Naive thymus-derived CD4-positive, alpha-beta T cell (primary cell): ENCODE measurements at regions of chr11 and their contacts with region 1.

Region 1: GRCh38 chr11:47269002-47269828 is 718 bp upstream of the MADD start:
- DNase-seq: peak; percentile 82 to 89 (median 87)
- ATAC-seq: peak; percentile 82
- H3K4me3 ChIP-seq: peak overlapping the region; percentile 65
- H3K4me3 Mint-ChIP-seq: peak overlapping the region; percentile 78 to 97 (median 87)
- H3K27ac ChIP-seq: peak overlapping the region; percentile 95
- H3K27ac Mint-ChIP-seq: peak overlapping the region; percentile 93 to 99 (median 96)
- H3K4me1 ChIP-seq: peaks cover 27 to 43% of the 10 kb centered on the region in 2 donors
- H3K4me1 Mint-ChIP-seq: peaks cover 38 to 62% (median 59%) of the 10 kb centered on the region in 7 donors
- H3K27me3 ChIP-seq: no peaks in the 10 kb centered on the region
- H3K27me3 Mint-ChIP-seq: no peaks in the 10 kb centered on the region

Region 2: GRCh38 chr11:46346886-46347636 is 922.2 kb before region 1 on chr11 and contains the start of gene DGKZ:
- CTCF ChIA-PET with region 1: no interaction called
- POLR2A ChIA-PET with region 1: no interaction called
- intact Hi-C with region 1: loop called in 1 of 2 experiments (anchors 5 kb)
- DNase-seq: peak; percentile 85 to 100 (median 96)
- ATAC-seq: peak; percentile 92
- H3K4me3 ChIP-seq: peak within 1 kb of the TSS; percentile 91
- H3K4me3 Mint-ChIP-seq: peak within 1 kb of the TSS; percentile 93 to 97 (median 95)
- H3K27ac ChIP-seq: peak within 1 kb of the TSS; percentile 83
- H3K27ac Mint-ChIP-seq: peak within 1 kb of the TSS; percentile 89 to 98 (median 94)
- H3K4me1 ChIP-seq: peaks cover 46 to 79% of the 10 kb centered on the region in 2 donors
- H3K4me1 Mint-ChIP-seq: peaks cover 61 to 85% (median 75%) of the 10 kb centered on the region in 7 donors
- H3K27me3 ChIP-seq: no peaks in the 10 kb centered on the region
- H3K27me3 Mint-ChIP-seq: peaks cover 0 to 3% (median 0%) of the 10 kb centered on the region in 5 donors
- total RNA-seq, gene DGKZ: 146 to 291 (median 263) TPM

Region 3: DNA sequence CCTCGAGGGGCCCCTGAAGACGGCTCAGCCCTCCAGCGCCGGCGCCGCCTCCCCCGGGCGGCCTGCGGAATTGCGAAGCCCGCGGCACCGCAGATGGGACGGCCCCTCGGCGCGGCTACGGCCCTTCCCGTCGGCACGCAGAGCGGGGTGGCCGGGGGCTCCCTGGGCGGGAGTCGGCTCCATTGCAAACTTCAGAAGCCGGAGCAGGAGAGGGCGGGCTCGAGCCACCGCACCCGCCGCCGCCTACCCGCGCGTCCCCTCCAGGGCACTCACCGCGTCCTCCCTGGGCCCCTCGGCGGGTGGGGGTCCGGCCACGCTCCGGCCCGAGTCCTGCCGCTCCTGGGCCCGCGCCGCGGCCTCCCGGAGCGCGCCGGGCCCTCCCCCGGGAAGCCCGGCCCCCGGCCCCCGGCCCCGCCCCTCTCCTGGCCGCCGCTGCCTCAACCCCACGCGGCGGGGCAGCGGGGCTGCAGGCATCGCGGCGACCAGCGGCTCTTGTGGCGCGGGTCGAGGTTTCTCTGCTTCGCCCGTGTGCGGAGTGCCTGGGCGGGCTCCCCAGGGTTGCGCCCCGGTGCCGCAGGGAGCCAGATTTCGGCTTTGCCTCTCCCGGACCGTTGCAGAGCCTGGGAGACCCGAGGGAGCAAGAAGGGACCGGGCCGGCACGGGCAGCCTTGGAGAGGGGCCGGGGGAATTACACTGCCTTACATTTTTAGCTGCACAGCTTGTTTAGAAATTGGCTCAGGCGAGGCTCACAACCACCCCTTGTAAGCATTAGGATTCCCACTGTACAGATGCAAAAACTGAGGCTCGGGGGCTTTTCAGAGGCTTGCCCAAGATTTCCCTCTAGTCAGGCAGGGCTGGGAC is 82.9 kb before region 1 on chr11 and contains the start of gene PACSIN3:
- CTCF ChIA-PET with region 1: no interaction called
- POLR2A ChIA-PET with region 1: interaction called, 5 read pairs
- intact Hi-C with region 1: loop called in 1 of 2 experiments (anchors 1 kb)
- DNase-seq: peak in 6 of 9 donors; percentile 22 to 66 (median 32)
- ATAC-seq: peak; percentile 75
- H3K4me3 ChIP-seq: peak within 1 kb of the TSS; percentile 54
- H3K4me3 Mint-ChIP-seq: peak within 1 kb of the TSS; percentile 79 to 89 (median 82)
- H3K27ac ChIP-seq: no peak within 1 kb of the TSS
- H3K27ac Mint-ChIP-seq: peak within 1 kb of the TSS in 4 of 9 donors; percentile 17 to 83 (median 27)
- H3K4me1 ChIP-seq: peaks cover 7 to 12% of the 10 kb centered on the region in 2 donors
- H3K4me1 Mint-ChIP-seq: peaks cover 0 to 9% (median 5%) of the 10 kb centered on the region in 7 donors
- H3K27me3 ChIP-seq: peaks cover 0 to 14% of the 10 kb centered on the region in 2 donors
- H3K27me3 Mint-ChIP-seq: peaks cover 4 to 44% (median 13%) of the 10 kb centered on the region in 5 donors
- total RNA-seq, gene PACSIN3: 0.34 to 4.3 TPM in 2 of 5 experiments, not detected in the others

Region 4: DNA sequence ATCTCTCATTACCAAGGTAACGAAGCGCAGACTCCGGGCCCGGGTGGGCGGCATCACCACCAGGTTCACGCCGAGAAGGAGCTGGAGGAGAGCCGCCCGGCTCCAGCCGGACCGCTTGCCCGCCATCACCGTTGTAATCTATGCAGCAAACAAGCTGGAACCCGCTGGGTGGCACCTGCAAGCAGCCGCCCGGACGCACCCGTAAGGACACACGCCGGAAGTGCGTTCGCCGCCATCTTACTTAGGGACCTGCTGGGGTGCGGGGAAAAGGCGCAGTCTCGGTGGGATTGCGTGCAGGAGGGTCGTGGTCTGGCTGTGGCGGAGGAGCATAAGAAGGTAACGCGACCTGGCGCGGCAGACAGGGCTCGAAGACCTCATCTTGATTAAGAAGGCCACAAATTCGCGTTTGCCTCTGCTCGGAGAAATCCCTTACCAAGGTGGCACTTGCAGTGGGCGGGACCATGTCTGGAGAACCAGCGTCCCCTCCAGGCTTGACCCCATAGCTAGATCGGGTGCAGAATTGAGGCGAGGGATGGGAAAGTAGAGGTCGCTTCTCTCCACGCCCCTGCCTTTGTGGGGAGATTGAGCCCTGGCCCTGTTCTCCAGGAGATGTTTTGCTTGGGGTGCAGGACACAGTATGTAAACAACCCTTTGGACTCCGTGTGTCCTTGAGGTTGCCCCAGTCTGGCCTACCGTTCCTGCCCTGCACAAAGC is 20.4 kb before region 1 on chr11 and contains the start of gene ACP2:
- CTCF ChIA-PET with region 1: interaction called, 10 read pairs
- POLR2A ChIA-PET with region 1: interaction called, 38 read pairs
- intact Hi-C with region 1: loop called (anchors 1 kb)
- DNase-seq: peak; percentile 83 to 91 (median 86)
- ATAC-seq: peak; percentile 99
- H3K4me3 ChIP-seq: peak within 1 kb of the TSS; percentile 93
- H3K4me3 Mint-ChIP-seq: peak within 1 kb of the TSS; percentile 93 to 100 (median 98)
- H3K27ac ChIP-seq: peak within 1 kb of the TSS; percentile 87
- H3K27ac Mint-ChIP-seq: peak within 1 kb of the TSS; percentile 94 to 100 (median 98)
- H3K4me1 ChIP-seq: peaks cover 11 to 15% of the 10 kb centered on the region in 2 donors
- H3K4me1 Mint-ChIP-seq: peaks cover 13 to 39% (median 29%) of the 10 kb centered on the region in 7 donors
- H3K27me3 ChIP-seq: no peaks in the 10 kb centered on the region
- H3K27me3 Mint-ChIP-seq: no peaks in the 10 kb centered on the region
- total RNA-seq, gene ACP2: 17.6 to 38.1 (median 24.3) TPM

Region 5: GRCh38 chr11:47454180-47454644 is 185.0 kb after region 1 on chr11:
- CTCF ChIA-PET with region 1: no interaction called
- POLR2A ChIA-PET with region 1: interaction called, 3 read pairs
- intact Hi-C with region 1: loop called in 1 of 2 experiments (anchors 1 kb)
- DNase-seq: peak in 8 of 9 donors; percentile 51 to 76 (median 68)
- ATAC-seq: peak; percentile 99
- H3K4me3 ChIP-seq: no peak overlapping the region
- H3K4me3 Mint-ChIP-seq: peak overlapping the region in 1 of 10 donors; percentile 41
- H3K27ac ChIP-seq: no peak overlapping the region
- H3K27ac Mint-ChIP-seq: peak overlapping the region in 6 of 9 donors; percentile 16 to 49 (median 44)
- H3K4me1 ChIP-seq: no peaks in the 10 kb centered on the region
- H3K4me1 Mint-ChIP-seq: peaks cover 0 to 7% (median 4%) of the 10 kb centered on the region in 7 donors
- H3K27me3 ChIP-seq: no peaks in the 10 kb centered on the region
- H3K27me3 Mint-ChIP-seq: no peaks in the 10 kb centered on the region

Region 6: DNA sequence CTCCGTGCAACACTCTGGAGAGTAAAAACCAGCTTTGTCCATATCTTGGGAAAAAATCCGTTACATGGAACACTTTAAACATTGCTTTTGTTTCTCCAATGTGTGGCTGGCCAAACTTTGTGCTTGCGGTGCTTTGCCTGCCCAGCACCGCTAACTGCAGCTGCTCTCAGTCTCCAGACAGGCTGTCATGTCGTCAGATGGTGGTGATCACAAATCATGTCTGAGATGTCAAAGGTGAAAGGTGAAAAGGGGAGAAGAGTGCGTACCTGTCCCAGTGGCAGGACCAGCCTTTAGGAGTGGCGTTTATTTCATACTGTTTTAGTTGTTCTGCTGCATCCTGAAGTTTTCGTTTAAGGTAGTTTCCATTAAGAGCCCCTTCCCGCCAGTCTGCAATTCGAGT is 463.1 kb after region 1 on chr11:
- CTCF ChIA-PET with region 1: no interaction called
- POLR2A ChIA-PET with region 1: no interaction called
- intact Hi-C with region 1: no loop called
- DNase-seq: no peak
- ATAC-seq: no peak
- H3K4me3 ChIP-seq: no peak overlapping the region
- H3K4me3 Mint-ChIP-seq: no peak overlapping the region
- H3K27ac ChIP-seq: no peak overlapping the region
- H3K27ac Mint-ChIP-seq: peak overlapping the region in 5 of 9 donors; percentile 21 to 81 (median 42)
- H3K4me1 ChIP-seq: no peaks in the 10 kb centered on the region
- H3K4me1 Mint-ChIP-seq: peaks cover 0 to 15% (median 2%) of the 10 kb centered on the region in 7 donors
- H3K27me3 ChIP-seq: no peaks in the 10 kb centered on the region
- H3K27me3 Mint-ChIP-seq: no peaks in the 10 kb centered on the region

Region 7: DNA sequence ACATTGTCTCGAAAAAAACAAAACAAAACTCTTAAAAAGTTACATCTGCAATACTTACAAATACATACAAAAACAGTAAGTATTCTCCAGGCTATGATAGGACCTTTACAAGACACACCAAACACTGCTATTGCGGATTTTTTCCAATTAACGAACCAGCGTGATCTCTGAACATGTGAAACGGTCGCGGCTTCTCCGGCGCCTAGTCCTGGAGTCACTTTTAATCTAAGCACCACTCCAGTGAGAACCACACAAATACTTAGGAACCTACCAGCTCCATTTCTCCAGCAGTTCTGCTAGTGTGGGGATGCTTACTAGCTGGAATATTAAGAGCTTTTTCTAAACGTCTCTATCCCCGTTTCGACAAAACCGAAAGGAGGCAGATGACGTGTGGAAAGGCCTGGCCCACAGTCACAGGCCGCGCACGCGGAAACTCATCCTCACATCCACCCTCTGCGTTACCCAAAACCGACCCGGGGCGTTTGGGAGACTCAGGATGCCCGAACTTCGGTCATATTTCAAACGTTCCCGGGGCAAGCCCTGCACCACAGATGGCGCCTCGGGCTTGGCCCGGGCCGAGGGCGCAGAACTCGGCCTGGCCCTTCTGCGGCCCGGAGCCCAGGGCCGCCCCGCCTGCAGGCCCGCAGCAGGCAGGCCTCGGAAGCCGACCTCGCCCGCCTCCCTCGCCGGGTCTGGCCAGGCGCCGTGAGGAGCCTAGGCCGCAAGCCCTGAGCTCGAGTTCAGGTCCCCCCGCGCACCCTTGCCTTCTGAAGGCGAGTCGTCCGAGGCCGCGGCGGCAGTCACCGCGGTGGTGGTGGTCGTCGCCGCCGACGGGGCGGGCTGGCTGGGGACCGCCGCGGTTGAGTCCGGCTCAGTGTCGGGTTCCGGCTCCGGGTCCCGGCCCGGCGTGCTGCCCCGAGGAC is 497.4 kb after region 1 on chr11:
- CTCF ChIA-PET with region 1: no interaction called
- POLR2A ChIA-PET with region 1: interaction called, 3 read pairs
- intact Hi-C with region 1: loop called (anchors 1 kb)
- DNase-seq: peak; percentile 60 to 84 (median 79)
- ATAC-seq: peak; percentile 52
- H3K4me3 ChIP-seq: peak overlapping the region; percentile 94
- H3K4me3 Mint-ChIP-seq: peak overlapping the region; percentile 88 to 100 (median 96)
- H3K27ac ChIP-seq: peak overlapping the region; percentile 97
- H3K27ac Mint-ChIP-seq: peak overlapping the region; percentile 96 to 100 (median 99)
- H3K4me1 ChIP-seq: peaks cover 20 to 22% of the 10 kb centered on the region in 2 donors
- H3K4me1 Mint-ChIP-seq: peaks cover 16 to 39% (median 23%) of the 10 kb centered on the region in 7 donors
- H3K27me3 ChIP-seq: no peaks in the 10 kb centered on the region
- H3K27me3 Mint-ChIP-seq: no peaks in the 10 kb centered on the region